Activated CD4-positive, alpha-beta T cell treated with anti-CD3 and anti-CD28 coated beads for 36 hours (primary cell): ENCODE measurements at regions of chr2 and their contacts with region 1.

Region 1: DNA sequence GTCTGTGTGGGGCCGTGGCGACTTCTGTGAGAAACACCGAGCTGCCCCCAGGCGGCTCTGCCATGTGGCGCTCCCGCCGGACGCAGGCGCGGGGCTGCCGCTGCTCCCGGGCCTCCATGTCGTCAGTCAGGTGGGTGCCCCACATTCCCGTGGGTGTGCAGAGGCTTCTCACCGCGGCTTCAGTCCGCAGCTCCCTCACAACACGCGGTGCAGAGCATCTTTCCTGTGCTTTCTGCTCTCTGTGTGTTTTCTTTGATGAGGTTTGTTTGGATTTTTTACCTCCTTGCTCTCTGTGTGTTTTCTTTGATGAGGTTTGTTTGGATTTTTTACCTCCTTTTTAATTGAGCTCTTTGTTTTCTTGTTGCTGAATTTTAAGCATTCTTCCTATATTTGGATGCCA is 13.0 kb downstream of the AQP12A start:
- DNase-seq: peak; percentile 54
- ATAC-seq: peak; percentile 30
- H3K4me3 Mint-ChIP-seq: peak overlapping the region; percentile 56
- H3K27ac Mint-ChIP-seq: no peak overlapping the region
- H3K4me1 Mint-ChIP-seq: peaks cover 13% of the 10 kb centered on the region
- H3K27me3 Mint-ChIP-seq: peaks cover 18% of the 10 kb centered on the region

Region 2: GRCh38 chr2:240513549-240514287 is 190.9 kb before region 1 on chr2:
- CTCF ChIA-PET with region 1: no interaction called
- POLR2A ChIA-PET with region 1: no interaction called
- intact Hi-C with region 1: loop called in 1 of 2 experiments (anchors 10 kb)
- DNase-seq: peak; percentile 93
- ATAC-seq: peak; percentile 99
- H3K4me3 Mint-ChIP-seq: no peak overlapping the region
- H3K27ac Mint-ChIP-seq: peak overlapping the region; percentile 71
- H3K4me1 Mint-ChIP-seq: peaks cover 13% of the 10 kb centered on the region
- H3K27me3 Mint-ChIP-seq: no peaks in the 10 kb centered on the region

Region 3: DNA sequence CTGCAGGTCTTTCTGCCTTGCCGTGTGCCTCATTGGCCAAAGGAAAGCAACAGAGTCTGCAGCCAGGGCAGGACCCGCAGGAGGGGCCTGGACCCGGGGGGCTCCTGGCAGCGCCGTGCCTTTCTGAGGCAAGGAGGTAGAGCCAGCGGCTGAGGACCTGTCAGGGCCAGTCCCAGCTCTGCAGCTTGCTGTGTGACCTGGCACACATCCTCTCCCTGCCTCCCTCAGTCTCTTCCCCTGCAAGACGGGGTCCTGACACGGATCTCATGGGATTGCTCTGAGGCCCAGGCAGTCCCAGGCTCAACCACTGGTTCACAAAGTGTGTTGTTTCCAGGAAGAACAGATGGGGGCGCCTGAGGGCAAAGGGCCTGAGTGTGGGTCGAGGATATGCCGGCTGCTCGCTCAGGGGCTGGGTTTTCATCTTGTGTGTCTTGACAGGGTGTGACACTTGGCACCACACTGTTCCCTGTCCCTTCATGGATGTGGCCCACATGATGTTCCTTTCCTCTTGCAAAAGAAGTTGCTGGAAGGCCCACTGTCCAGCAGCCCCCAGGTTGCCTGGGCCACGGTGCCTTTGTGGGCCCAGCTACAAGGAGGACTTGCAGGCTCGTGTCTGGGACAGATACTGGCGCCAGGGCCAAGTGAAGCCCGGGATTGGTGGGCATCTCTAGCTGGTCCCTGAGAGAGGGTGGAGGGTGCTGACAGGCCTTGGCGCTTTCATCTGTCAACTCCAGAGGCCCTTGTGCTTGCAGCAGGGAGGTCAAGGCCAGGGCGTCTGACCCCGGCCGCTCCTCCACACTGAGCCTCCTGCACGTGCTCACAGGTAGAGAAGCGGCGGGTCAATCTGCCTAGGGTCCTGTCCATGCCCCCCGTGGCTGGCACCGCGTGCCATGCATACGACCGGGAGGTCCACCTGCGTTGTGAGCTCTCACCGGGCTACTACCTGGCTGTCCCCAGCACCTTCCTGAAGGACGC is 108.9 kb before region 1 on chr2:
- CTCF ChIA-PET with region 1: no interaction called
- POLR2A ChIA-PET with region 1: no interaction called
- intact Hi-C with region 1: loop called in 1 of 2 experiments (anchors 5 kb)
- DNase-seq: peak; percentile 61
- ATAC-seq: peak; percentile 77
- H3K4me3 Mint-ChIP-seq: no peak overlapping the region
- H3K27ac Mint-ChIP-seq: no peak overlapping the region
- H3K4me1 Mint-ChIP-seq: no peaks in the 10 kb centered on the region
- H3K27me3 Mint-ChIP-seq: no peaks in the 10 kb centered on the region